ENCODE measurements at regions of chr12 and their contacts with region 1.

Region 1: DNA sequence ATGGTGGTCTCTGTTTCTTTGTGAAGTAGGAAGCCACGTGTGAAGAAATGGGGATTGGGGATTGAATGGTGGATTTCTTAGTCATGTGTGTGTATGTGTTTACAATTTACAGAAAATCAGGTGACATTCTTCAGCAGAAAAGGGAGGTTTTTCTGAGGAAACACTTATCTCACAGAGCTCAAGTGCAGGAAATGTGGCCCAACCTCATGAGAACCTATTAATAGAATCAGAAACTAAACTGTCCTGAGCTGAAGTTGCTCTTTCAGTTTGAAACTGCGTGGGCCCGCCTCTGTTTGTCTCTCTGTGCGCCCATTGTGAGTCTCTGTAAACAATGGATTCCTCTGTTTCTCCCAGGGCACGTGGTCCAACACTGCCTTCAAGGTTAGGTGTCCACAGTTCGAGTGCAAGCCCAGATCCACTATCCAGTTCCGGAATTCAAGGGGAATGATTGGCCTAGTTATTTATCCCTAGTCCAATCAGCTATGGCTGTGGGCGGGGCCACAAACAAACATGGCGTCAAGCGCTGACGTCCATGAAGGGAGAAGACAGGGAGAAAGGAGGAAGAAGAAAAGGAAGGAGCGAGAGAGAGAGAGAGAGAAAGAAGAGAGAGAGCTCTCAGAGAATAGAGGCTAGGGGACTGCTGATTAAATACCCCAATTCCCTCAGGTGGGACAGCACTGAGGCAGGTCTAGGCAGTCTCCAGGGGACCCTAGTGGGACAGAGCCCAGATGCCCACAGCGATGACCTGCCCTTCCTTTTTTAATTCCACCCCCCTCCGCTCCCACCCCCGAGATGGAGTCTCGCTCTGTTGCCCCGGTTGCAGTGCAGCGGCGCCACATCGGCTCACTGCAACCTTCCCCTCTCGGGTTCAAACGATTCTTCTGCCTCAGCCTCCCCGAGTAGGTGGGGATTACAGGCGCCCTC is 31.4 kb upstream of the C12orf76 start:
- DNase-seq: peak; percentile 86
- ATAC-seq: peak; percentile 98
- H3K4me3 ChIP-seq: peak overlapping the region; percentile 38; the same call in 1 of the 2 replicates
- H3K27ac ChIP-seq: peak overlapping the region; percentile 88
- H3K4me1 ChIP-seq: peaks cover 19% of the 10 kb centered on the region
- H3K27me3 ChIP-seq: no peaks in the 10 kb centered on the region
- CTCF ChIP-seq: no peak
- EP300 ChIP-seq: 0 out of 4 replicates have a peak, but pooled peaks of 1 of the 2 experiments have one; percentile 33
- POLR2A ChIP-seq: peak; percentile 71
- RAD21 ChIP-seq: no peak

Region 2: GRCh38 chr12:110004598-110004997 is 75.1 kb before region 1 on chr12:
- CTCF ChIA-PET with region 1: interaction called, 3 read pairs
- POLR2A ChIA-PET with region 1: interaction called, 3 read pairs
- RAD21 ChIA-PET with region 1: interaction called, 12 read pairs
- SMC1A ChIA-PET with region 1: interaction called, 4 read pairs
- in situ Hi-C with region 1: no loop called
- intact Hi-C with region 1: no loop called
- DNase-seq: peak; percentile 60
- ATAC-seq: peak; percentile 79
- H3K4me3 ChIP-seq: peak overlapping the region; percentile 65
- H3K27ac ChIP-seq: peak overlapping the region; percentile 72
- H3K4me1 ChIP-seq: peaks cover 40% of the 10 kb centered on the region
- H3K27me3 ChIP-seq: no peaks in the 10 kb centered on the region
- CTCF ChIP-seq: no peak
- EP300 ChIP-seq: peak in 1 of 2 experiments; percentile 59; a peak in 1 of 4 replicates
- POLR2A ChIP-seq: no peak
- RAD21 ChIP-seq: no peak

Region 3: DNA sequence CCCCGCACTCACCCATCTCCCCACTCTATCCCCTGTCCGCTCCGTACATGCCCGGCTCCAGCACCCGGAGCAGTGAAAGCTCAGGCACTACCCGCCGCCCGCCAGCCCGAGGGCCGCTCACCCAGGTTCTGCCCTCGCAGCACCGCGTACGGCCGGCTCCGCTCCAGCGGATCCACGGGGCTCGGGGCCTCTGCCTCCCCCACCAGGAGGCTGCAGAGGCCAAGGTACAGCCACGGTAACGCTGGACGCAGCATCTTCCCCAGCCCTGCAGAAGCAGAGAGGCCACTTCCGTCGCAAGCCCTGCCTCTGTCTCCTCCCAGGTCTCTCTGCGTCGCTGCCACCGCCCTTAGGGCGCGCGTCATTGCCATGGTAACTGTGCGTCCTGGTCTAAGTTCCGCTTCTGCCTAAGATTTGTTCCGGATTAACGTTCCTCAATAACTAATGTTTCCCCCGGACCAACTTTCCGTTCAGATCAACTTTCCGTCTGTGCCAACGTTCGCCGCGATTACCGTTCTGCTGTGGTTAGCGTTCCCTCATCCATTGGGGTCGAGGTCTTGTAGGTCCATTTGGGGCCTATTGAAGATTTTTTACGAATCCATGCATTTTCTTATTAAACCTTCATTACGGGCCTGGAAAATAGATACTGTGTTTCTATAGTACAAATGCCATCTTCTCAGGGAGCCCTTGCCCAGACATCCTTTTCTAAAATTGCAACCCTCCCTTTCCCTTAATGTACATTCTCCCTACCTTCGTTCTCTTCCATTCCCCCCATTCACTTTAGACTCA is 31.3 kb before region 1 on chr12 and contains the start of gene C12orf76:
- CTCF ChIA-PET with region 1: interaction called, 3 read pairs
- POLR2A ChIA-PET with region 1: interaction called, 4 read pairs
- RAD21 ChIA-PET with region 1: interaction called, 9 read pairs
- SMC1A ChIA-PET with region 1: interaction called, 5 read pairs
- in situ Hi-C with region 1: no loop called
- intact Hi-C with region 1: loop called (anchors 2 kb)
- DNase-seq: peak; percentile 96
- ATAC-seq: peak; percentile 99
- H3K4me3 ChIP-seq: peak within 1 kb of the TSS; percentile 87
- H3K27ac ChIP-seq: peak within 1 kb of the TSS; percentile 77
- H3K4me1 ChIP-seq: peaks cover 29% of the 10 kb centered on the region
- H3K27me3 ChIP-seq: no peaks in the 10 kb centered on the region
- CTCF ChIP-seq: peak; percentile 9 to 27 (median 13); a peak in 2 of 6 replicates
- EP300 ChIP-seq: no peak
- POLR2A ChIP-seq: peak; percentile 82
- RAD21 ChIP-seq: peak; percentile 32; the same call in 1 of the 2 replicates
- polyA plus RNA-seq, gene C12orf76: 3.6 to 4.6 TPM

Region 4: GRCh38 chr12:110176745-110177144 is 97.0 kb after region 1 on chr12:
- CTCF ChIA-PET with region 1: no interaction called
- POLR2A ChIA-PET with region 1: interaction called, 10 read pairs
- RAD21 ChIA-PET with region 1: no interaction called
- SMC1A ChIA-PET with region 1: no interaction called
- in situ Hi-C with region 1: no loop called
- intact Hi-C with region 1: no loop called
- DNase-seq: no peak
- ATAC-seq: no peak
- H3K4me3 ChIP-seq: no peak overlapping the region
- H3K27ac ChIP-seq: no peak overlapping the region
- H3K4me1 ChIP-seq: no peaks in the 10 kb centered on the region
- H3K27me3 ChIP-seq: no peaks in the 10 kb centered on the region
- CTCF ChIP-seq: no peak
- EP300 ChIP-seq: no peak
- POLR2A ChIP-seq: no peak
- RAD21 ChIP-seq: no peak